WTC11 (cell line): ENCODE measurements at regions of chr1 and their contacts with region 1.

Region 1: DNA sequence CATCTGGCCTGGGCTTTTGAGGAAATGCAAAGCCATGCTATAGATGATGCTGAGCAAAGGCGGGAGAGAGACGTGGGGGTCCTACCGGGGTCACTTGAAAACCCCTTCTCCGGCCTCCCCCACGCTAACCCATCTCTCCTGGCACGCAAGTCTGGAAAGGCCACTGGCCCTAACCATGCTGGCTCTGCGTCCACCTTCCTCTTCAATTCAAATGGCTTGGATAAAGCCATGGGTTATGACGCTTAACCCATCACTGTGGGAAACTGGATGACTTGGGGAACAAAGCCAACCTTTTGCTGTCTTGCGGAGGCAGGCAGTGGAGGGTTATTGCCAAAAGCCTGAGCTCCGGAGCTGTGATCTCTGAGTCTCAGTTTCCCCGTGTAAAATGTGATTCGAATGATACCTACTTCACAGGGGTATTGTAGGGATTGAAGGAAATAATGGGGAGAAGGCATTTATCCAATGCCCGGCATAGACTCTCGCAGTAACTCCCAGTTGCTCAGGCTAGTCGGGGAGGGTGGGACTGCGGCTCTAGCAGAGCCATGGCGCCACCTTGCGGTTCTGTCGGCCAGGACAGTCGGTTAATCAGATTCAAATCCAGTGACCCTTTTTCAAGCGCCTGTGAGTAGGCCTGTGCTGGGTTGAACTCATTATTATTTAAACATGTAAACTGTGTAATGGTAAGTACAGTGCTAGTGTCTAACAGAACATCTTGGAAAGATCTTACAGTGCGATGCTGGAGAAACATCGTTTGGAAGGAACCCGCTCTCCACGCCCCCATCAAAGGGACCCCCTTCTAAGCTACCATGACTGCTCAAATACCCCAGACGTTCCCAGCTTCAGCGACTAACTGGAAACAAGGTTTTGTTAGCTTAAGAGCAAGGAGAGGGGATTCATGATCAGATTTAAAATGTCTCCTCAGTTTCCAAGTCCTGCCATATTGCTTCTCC is 20.3 kb downstream of the NEK2 start:
- DNase-seq: peak; percentile 93
- ATAC-seq: peak; percentile 96
- H3K4me3 Mint-ChIP-seq: no peak overlapping the region
- H3K27ac Mint-ChIP-seq: no peak overlapping the region
- H3K4me1 Mint-ChIP-seq: peaks cover 17% of the 10 kb centered on the region
- H3K27me3 Mint-ChIP-seq: no peaks in the 10 kb centered on the region
- CTCF ChIP-seq: peak; percentile 92

Region 2: GRCh38 chr1:211514030-211514754 is 140.9 kb before region 1 on chr1:
- CTCF ChIA-PET with region 1: interaction called, 11 read pairs
- POLR2A ChIA-PET with region 1: no interaction called
- DNase-seq: peak; percentile 91
- ATAC-seq: peak; percentile 87
- H3K4me3 Mint-ChIP-seq: peak overlapping the region; percentile 43
- H3K27ac Mint-ChIP-seq: no peak overlapping the region
- H3K4me1 Mint-ChIP-seq: peaks cover 14% of the 10 kb centered on the region
- H3K27me3 Mint-ChIP-seq: peaks cover 25% of the 10 kb centered on the region
- CTCF ChIP-seq: peak; percentile 60

Region 3: DNA sequence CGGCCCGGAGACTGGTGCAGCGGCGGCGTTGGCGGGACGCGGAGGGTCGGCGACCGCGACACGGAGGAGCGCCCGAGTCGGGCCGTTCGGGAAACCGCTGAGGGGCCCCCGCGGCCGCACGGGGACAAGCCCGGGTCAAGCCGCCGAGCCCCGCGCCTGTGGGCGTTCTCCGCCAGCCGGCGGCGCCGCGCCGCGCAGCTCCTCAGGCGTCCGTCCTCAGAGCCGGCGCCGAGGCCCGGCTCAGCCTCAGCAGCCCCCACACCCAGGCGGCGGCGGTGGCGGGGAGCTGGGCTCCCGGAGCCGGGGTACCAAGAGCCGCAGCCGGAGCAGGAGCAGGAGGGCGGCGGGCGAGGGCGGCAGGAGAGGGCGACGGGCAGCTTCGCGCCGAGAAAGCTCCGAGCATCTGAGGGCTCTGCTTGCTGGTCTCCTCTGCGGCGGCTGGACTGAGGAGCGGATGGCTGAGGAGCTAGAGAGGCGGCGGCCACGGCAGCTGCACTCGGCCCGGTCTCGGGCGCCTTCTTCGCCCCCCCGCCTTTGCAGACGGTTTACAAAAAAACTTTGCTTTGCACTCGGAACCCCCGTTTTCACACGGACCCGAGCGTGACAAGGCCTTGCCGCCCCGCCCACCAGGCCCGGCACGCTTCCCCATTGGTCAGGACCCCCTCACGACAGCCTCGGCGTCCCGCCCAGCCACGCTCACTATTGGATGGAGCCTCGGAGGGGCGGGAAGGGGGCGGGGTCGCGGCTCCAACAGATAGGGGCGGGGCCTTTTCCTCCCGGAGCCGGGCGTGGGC is 76.3 kb before region 1 on chr1 and contains the start of gene SLC30A1:
- CTCF ChIA-PET with region 1: interaction called, 11 read pairs
- POLR2A ChIA-PET with region 1: no interaction called
- DNase-seq: peak; percentile 99
- ATAC-seq: peak; percentile 88
- H3K4me3 Mint-ChIP-seq: peak within 1 kb of the TSS; percentile 92
- H3K27ac Mint-ChIP-seq: peak within 1 kb of the TSS; percentile 84
- H3K4me1 Mint-ChIP-seq: peaks cover 45% of the 10 kb centered on the region
- H3K27me3 Mint-ChIP-seq: no peaks in the 10 kb centered on the region
- CTCF ChIP-seq: no peak
- total RNA-seq, gene SLC30A1: 20.0 to 26.9 TPM (median 25.3 TPM) in 3 replicates

Region 4: GRCh38 chr1:211643324-211644212 is 11.5 kb before region 1 on chr1:
- CTCF ChIA-PET with region 1: interaction called, 11 read pairs
- POLR2A ChIA-PET with region 1: no interaction called
- DNase-seq: no peak
- ATAC-seq: peak; percentile 73
- H3K4me3 Mint-ChIP-seq: no peak overlapping the region
- H3K27ac Mint-ChIP-seq: no peak overlapping the region
- H3K4me1 Mint-ChIP-seq: peaks cover 14% of the 10 kb centered on the region
- H3K27me3 Mint-ChIP-seq: no peaks in the 10 kb centered on the region
- CTCF ChIP-seq: no peak

Region 5: GRCh38 chr1:211788626-211789025 is 133.5 kb after region 1 on chr1:
- CTCF ChIA-PET with region 1: no interaction called
- POLR2A ChIA-PET with region 1: no interaction called
- DNase-seq: no peak
- ATAC-seq: no peak
- H3K4me3 Mint-ChIP-seq: no peak overlapping the region
- H3K27ac Mint-ChIP-seq: no peak overlapping the region
- H3K4me1 Mint-ChIP-seq: peaks cover 3% of the 10 kb centered on the region; the same call in 1 of the 2 replicates
- H3K27me3 Mint-ChIP-seq: no peaks in the 10 kb centered on the region
- CTCF ChIP-seq: no peak